CD4-positive, alpha-beta memory T cell (primary cell): ENCODE measurements at regions of chr1 and their contacts with region 1.

Region 1: GRCh38 chr1:155091071-155091709 is 12.6 kb downstream of the EFNA3 start:
- DNase-seq: peak; percentile 72 to 78 (median 74)
- H3K4me3 ChIP-seq: no peak overlapping the region
- H3K4me3 Mint-ChIP-seq: no peak overlapping the region
- H3K27ac ChIP-seq: no peak overlapping the region
- H3K27ac Mint-ChIP-seq: no peak overlapping the region
- H3K4me1 ChIP-seq: peaks cover 14% of the 10 kb centered on the region
- H3K4me1 Mint-ChIP-seq: peaks cover 3 to 10% (median 5%) of the 10 kb centered on the region in 4 donors
- H3K27me3 ChIP-seq: no peaks in the 10 kb centered on the region
- H3K27me3 Mint-ChIP-seq: peaks cover 2 to 3% of the 10 kb centered on the region in 2 donors

Region 2: DNA sequence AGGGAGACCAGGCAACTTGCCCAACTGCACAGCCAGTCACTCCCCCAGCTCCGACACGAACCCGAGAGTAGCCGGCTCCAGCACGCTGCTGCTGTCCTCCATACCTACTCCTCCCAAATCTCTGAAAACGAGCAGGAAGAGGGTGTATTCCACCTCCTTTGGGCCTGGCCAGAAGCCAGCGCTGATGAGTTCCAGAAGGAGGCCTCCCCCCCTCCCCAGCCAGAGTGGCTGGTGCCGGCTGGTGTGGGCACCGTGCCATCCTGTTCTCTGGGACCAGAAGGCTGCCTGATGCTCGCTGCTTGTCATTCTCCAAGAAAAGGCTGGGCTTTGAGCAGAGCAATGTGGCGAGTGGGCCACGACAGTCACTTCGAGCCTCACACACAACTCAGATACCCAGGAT is 243.3 kb before region 1 on chr1:
- CTCF ChIA-PET with region 1: no interaction called
- POLR2A ChIA-PET with region 1: no interaction called
- intact Hi-C with region 1: no loop called
- DNase-seq: no peak
- H3K4me3 ChIP-seq: no peak overlapping the region
- H3K4me3 Mint-ChIP-seq: no peak overlapping the region
- H3K27ac ChIP-seq: no peak overlapping the region
- H3K27ac Mint-ChIP-seq: peak overlapping the region in 1 of 7 donors; percentile 61
- H3K4me1 ChIP-seq: no peaks in the 10 kb centered on the region
- H3K4me1 Mint-ChIP-seq: no peaks in the 10 kb centered on the region
- H3K27me3 ChIP-seq: no peaks in the 10 kb centered on the region
- H3K27me3 Mint-ChIP-seq: peaks cover 0 to 4% of the 10 kb centered on the region in 2 donors

Region 3: GRCh38 chr1:155044812-155045690 is 46.1 kb before region 1 on chr1:
- CTCF ChIA-PET with region 1: interaction called, 63 read pairs
- POLR2A ChIA-PET with region 1: no interaction called
- intact Hi-C with region 1: no loop called
- DNase-seq: peak; percentile 60 to 66 (median 64)
- H3K4me3 ChIP-seq: no peak overlapping the region
- H3K4me3 Mint-ChIP-seq: no peak overlapping the region
- H3K27ac ChIP-seq: no peak overlapping the region
- H3K27ac Mint-ChIP-seq: peak overlapping the region in 1 of 7 donors; percentile 5
- H3K4me1 ChIP-seq: peaks cover 5% of the 10 kb centered on the region
- H3K4me1 Mint-ChIP-seq: peaks cover 7 to 16% (median 11%) of the 10 kb centered on the region in 4 donors
- H3K27me3 ChIP-seq: no peaks in the 10 kb centered on the region
- H3K27me3 Mint-ChIP-seq: no peaks in the 10 kb centered on the region

Region 4: GRCh38 chr1:155105604-155106022 is 14.4 kb after region 1 on chr1:
- CTCF ChIA-PET with region 1: interaction called, 12 read pairs
- POLR2A ChIA-PET with region 1: no interaction called
- intact Hi-C with region 1: no loop called
- DNase-seq: no peak
- H3K4me3 ChIP-seq: no peak overlapping the region
- H3K4me3 Mint-ChIP-seq: no peak overlapping the region
- H3K27ac ChIP-seq: no peak overlapping the region
- H3K27ac Mint-ChIP-seq: no peak overlapping the region
- H3K4me1 ChIP-seq: no peaks in the 10 kb centered on the region
- H3K4me1 Mint-ChIP-seq: no peaks in the 10 kb centered on the region
- H3K27me3 ChIP-seq: no peaks in the 10 kb centered on the region
- H3K27me3 Mint-ChIP-seq: peaks cover 0 to 5% of the 10 kb centered on the region in 2 donors

Region 5: GRCh38 chr1:155145491-155145890 is 54.3 kb after region 1 on chr1:
- CTCF ChIA-PET with region 1: interaction called, 11 read pairs
- POLR2A ChIA-PET with region 1: no interaction called
- intact Hi-C with region 1: no loop called
- DNase-seq: no peak
- H3K4me3 ChIP-seq: no peak overlapping the region
- H3K4me3 Mint-ChIP-seq: no peak overlapping the region
- H3K27ac ChIP-seq: no peak overlapping the region
- H3K27ac Mint-ChIP-seq: no peak overlapping the region
- H3K4me1 ChIP-seq: peaks cover 3% of the 10 kb centered on the region
- H3K4me1 Mint-ChIP-seq: peaks cover 2 to 4% (median 2%) of the 10 kb centered on the region in 4 donors
- H3K27me3 ChIP-seq: no peaks in the 10 kb centered on the region
- H3K27me3 Mint-ChIP-seq: peaks cover 6 to 30% of the 10 kb centered on the region in 2 donors

Region 6: DNA sequence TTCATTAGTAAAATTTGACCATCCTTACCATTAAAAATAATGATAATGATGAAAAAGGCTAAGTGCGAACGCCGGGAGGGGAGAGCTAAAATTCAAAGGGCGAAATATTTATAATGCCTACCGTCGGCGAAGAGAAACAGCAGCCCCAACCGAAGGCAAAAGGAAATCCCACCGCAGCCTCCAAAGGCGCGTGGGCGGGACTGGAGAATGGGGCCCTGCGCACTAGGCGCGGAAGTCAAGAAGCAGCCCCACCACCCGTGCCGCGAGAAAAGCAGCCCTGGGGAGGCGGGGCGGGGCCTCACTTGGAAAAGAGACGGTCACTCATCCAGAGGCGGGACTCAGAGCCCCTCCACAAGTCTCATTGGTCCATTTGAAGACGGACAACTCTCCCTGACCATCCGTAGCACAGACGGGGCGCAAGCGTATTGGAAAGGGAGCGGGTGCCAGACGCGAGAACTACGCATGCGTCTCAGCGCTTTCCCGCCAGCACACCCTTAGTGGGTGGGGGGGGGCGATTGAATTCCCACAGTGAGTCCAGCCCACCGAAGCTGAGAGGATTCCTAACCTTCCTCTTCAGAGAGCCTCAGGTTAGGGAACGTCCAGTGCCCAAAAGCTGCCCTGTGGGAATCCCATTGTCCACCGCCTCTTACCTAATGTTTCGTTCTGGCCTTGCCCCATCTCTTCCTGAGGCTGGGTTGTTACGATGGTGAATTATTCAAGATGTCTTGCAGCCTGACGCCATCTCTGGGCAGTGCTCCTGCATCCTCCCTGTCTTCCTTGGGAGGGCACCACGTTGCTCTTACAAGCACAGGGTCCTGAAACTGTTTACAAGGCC is 136.3 kb after region 1 on chr1:
- CTCF ChIA-PET with region 1: interaction called, 7 read pairs
- POLR2A ChIA-PET with region 1: no interaction called
- intact Hi-C with region 1: loop called (anchors 1 kb)
- DNase-seq: peak; percentile 94 to 99 (median 98)
- H3K4me3 ChIP-seq: peak overlapping the region; percentile 80 to 86
- H3K4me3 Mint-ChIP-seq: peak overlapping the region; percentile 78 to 93 (median 88)
- H3K27ac ChIP-seq: peak overlapping the region; percentile 69
- H3K27ac Mint-ChIP-seq: peak overlapping the region; percentile 77 to 97 (median 93)
- H3K4me1 ChIP-seq: peaks cover 19% of the 10 kb centered on the region
- H3K4me1 Mint-ChIP-seq: peaks cover 14 to 34% (median 25%) of the 10 kb centered on the region in 4 donors
- H3K27me3 ChIP-seq: no peaks in the 10 kb centered on the region
- H3K27me3 Mint-ChIP-seq: no peaks in the 10 kb centered on the region

Region 7: DNA sequence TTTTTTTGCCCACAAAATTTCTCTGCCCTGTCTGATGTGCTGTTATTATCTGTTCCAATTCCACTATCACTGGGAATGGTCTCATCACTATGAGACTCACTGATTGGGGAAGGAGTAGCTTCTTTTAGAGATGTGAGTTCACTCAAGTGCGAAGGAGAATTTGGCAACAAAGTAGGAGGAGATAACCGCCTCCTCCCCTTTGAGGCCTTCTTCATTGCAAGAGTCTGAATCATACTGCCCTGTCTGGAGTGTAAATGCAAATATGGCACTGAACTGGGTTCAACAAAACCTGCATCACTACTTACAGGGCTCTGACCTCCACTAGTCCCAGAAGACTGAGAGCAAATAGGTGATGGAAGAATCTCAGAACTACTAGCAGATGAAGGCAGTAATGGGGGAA is 388.0 kb after region 1 on chr1:
- CTCF ChIA-PET with region 1: no interaction called
- POLR2A ChIA-PET with region 1: no interaction called
- intact Hi-C with region 1: no loop called
- DNase-seq: no peak
- H3K4me3 ChIP-seq: no peak overlapping the region
- H3K4me3 Mint-ChIP-seq: no peak overlapping the region
- H3K27ac ChIP-seq: no peak overlapping the region
- H3K27ac Mint-ChIP-seq: peak overlapping the region in 3 of 7 donors; percentile 4 to 52 (median 6)
- H3K4me1 ChIP-seq: no peaks in the 10 kb centered on the region
- H3K4me1 Mint-ChIP-seq: peaks cover 5 to 25% (median 15%) of the 10 kb centered on the region in 4 donors
- H3K27me3 ChIP-seq: no peaks in the 10 kb centered on the region
- H3K27me3 Mint-ChIP-seq: no peaks in the 10 kb centered on the region

Region 8: DNA sequence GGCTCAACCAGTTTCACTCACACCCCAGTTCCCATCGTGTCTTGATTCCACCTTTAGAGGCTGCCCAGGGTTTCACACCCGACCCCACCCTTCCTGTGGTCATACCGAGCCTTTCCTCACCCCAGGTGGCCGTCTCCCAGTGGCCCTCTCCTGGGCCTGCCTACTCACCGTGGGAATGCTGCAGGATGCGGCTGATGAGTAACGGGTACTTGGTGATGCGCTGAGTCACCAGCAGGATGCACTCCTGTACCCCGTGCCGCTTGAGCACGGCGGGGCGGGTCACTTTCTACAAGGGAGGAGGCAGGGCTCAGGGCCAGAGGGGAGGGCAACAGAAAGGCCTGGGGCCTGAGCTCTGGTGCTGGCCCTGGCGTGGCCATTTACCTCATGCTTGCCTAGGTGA is 870.7 kb after region 1 on chr1:
- CTCF ChIA-PET with region 1: no interaction called
- POLR2A ChIA-PET with region 1: no interaction called
- intact Hi-C with region 1: no loop called
- DNase-seq: no peak
- H3K4me3 ChIP-seq: no peak overlapping the region
- H3K4me3 Mint-ChIP-seq: no peak overlapping the region
- H3K27ac ChIP-seq: peak overlapping the region; percentile 38
- H3K27ac Mint-ChIP-seq: peak overlapping the region in 6 of 7 donors; percentile 57 to 78 (median 76)
- H3K4me1 ChIP-seq: peaks cover 19% of the 10 kb centered on the region
- H3K4me1 Mint-ChIP-seq: peaks cover 9 to 33% (median 17%) of the 10 kb centered on the region in 4 donors
- H3K27me3 ChIP-seq: no peaks in the 10 kb centered on the region
- H3K27me3 Mint-ChIP-seq: no peaks in the 10 kb centered on the region